ENCODE measurements at regions of chr10 and their contacts with region 1.

Region 1: GRCh38 chr10:30529373-30529998 is 95.5 kb downstream of the MAP3K8 start:
- DNase-seq: peak; percentile 81
- H3K4me3 Mint-ChIP-seq: peak overlapping the region; percentile 73
- H3K27ac Mint-ChIP-seq: peak overlapping the region; percentile 96
- H3K4me1 Mint-ChIP-seq: peaks cover 79% of the 10 kb centered on the region
- H3K27me3 Mint-ChIP-seq: no peaks in the 10 kb centered on the region

Region 2: GRCh38 chr10:30127120-30127541 is 402.4 kb before region 1 on chr10:
- CTCF ChIA-PET with region 1: no interaction called
- POLR2A ChIA-PET with region 1: no interaction called
- DNase-seq: no peak
- H3K4me3 Mint-ChIP-seq: no peak overlapping the region
- H3K27ac Mint-ChIP-seq: no peak overlapping the region
- H3K4me1 Mint-ChIP-seq: peaks cover 5% of the 10 kb centered on the region
- H3K27me3 Mint-ChIP-seq: peaks cover 4% of the 10 kb centered on the region

Region 3: GRCh38 chr10:30392564-30392990 is 136.9 kb before region 1 on chr10:
- CTCF ChIA-PET with region 1: interaction called, 12 read pairs
- POLR2A ChIA-PET with region 1: no interaction called
- DNase-seq: peak; percentile 80
- H3K4me3 Mint-ChIP-seq: no peak overlapping the region
- H3K27ac Mint-ChIP-seq: no peak overlapping the region
- H3K4me1 Mint-ChIP-seq: peaks cover 9% of the 10 kb centered on the region
- H3K27me3 Mint-ChIP-seq: peaks cover 34% of the 10 kb centered on the region

Region 4: GRCh38 chr10:30413996-30414576 is 115.4 kb before region 1 on chr10:
- CTCF ChIA-PET with region 1: interaction called, 23 read pairs
- POLR2A ChIA-PET with region 1: no interaction called
- DNase-seq: peak; percentile 53
- H3K4me3 Mint-ChIP-seq: no peak overlapping the region
- H3K27ac Mint-ChIP-seq: no peak overlapping the region
- H3K4me1 Mint-ChIP-seq: peaks cover 31% of the 10 kb centered on the region
- H3K27me3 Mint-ChIP-seq: no peaks in the 10 kb centered on the region

Region 5: DNA sequence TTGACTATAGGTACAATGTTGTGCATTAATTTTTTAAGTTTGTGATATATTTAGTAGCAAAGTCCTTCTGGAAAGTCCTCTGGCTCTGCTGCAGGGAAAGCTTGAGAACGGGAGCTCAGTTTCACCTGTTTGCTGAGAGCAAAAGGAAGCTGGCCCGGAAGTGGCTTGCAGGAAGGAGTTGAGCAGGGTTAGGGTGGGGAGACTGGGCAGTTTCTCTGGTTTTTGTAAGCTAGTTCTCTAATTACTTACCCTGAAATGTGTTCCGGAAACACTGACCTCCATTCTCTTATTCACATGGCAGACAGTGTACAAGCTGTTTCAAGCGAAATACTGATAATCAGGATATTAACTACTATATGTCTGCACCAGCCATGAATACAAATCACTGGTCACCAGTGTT is 73.2 kb before region 1 on chr10:
- CTCF ChIA-PET with region 1: interaction called, 4 read pairs
- POLR2A ChIA-PET with region 1: interaction called, 12 read pairs
- DNase-seq: peak; percentile 51
- H3K4me3 Mint-ChIP-seq: peak overlapping the region; percentile 48
- H3K27ac Mint-ChIP-seq: peak overlapping the region; percentile 86
- H3K4me1 Mint-ChIP-seq: peaks cover 41% of the 10 kb centered on the region
- H3K27me3 Mint-ChIP-seq: no peaks in the 10 kb centered on the region

Region 6: GRCh38 chr10:30550967-30551815 is 21.7 kb after region 1 on chr10:
- CTCF ChIA-PET with region 1: no interaction called
- POLR2A ChIA-PET with region 1: no interaction called
- DNase-seq: no peak
- H3K4me3 Mint-ChIP-seq: no peak overlapping the region
- H3K27ac Mint-ChIP-seq: peak overlapping the region; percentile 37
- H3K4me1 Mint-ChIP-seq: peaks cover 14% of the 10 kb centered on the region
- H3K27me3 Mint-ChIP-seq: peaks cover 6% of the 10 kb centered on the region